ENCODE measurements at regions of chr14 and their contacts with region 1.

Region 1: GRCh38 chr14:32618991-32619390 is 289.9 kb downstream of the AKAP6 start:
- DNase-seq: no peak
- ATAC-seq: no peak

Region 2: DNA sequence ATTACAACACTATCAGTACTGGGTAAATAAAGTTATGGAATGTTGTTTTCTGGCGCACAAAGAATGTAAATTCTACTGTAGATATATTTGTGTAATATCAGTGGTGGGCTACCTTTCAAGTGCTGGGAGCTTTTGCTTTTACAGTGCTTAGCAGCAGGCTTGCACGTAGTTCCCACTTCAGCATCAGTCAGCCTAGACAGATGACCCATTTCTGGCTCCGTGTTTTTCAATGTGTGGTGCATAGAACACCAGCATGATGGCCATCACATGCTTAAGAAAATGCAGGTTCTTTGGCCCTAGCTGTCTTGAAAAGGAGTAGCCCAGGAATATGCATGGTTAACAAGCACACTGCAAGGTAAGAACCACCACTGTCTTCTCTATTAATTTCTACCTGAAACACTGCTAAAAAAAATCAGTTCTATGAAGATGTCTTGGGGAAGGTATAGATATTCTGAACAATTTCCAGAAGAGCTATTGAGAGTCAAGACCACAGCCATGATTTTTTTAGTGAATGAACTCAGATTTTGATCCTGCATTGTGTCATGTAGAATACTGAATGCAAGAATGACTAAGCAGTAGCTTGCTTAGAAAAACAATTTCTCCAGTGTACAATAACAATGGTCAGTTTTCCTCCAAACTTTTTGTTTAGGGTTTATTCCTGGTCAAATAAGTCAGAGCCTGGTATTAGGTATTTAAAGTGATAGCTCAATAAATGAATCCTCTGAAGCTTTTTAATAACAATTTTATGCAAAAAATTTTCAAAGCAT is 94.2 kb before region 1 on chr14:
- intact Hi-C with region 1: no loop called
- DNase-seq: no peak
- ATAC-seq: no peak

Region 3: GRCh38 chr14:32657081-32657480 is 38.1 kb after region 1 on chr14:
- intact Hi-C with region 1: loop called (anchors 2 kb)
- DNase-seq: no peak
- ATAC-seq: peak; percentile 93

Measured in sciatic nerve (tissue), 2 donors.